ENCODE measurements at regions of chr2 and their contacts with region 1.

Region 1: DNA sequence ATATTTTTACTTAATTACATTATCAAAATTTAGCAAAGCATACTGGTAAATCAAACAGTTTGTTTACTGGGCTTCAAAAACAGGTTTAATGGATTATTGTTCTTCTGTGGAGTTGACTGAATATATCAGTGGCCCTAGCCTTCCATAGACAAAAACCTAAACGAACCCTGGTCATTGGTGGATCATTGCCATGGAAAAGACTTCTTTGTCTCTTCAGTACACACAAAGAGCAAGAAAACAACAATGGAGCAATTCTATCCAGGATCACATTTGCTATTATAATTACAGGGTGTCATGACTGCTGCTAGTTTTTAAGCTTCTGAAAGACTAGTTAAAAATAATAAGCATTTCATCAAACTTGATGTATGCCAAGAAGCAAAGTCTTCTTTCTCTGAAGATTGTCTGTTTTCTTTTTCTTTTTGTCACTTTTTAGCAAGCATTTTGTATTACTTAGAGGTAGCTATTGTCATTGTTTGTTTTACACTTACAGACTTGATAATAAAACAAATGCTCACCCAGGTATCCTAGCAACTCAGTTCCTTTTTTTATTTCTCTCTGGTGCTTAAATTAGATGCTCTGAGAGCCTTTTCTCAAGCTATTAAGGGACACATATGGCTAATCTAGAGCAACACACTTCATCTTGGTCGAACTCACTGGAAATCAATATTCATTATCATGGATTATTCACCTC is 1228.7 kb upstream of the DDX18 start:
- DNase-seq: no peak
- H3K4me3 ChIP-seq: no peak overlapping the region
- H3K27ac ChIP-seq: no peak overlapping the region
- H3K4me1 ChIP-seq: no peaks in the 10 kb centered on the region
- H3K27me3 ChIP-seq: no peaks in the 10 kb centered on the region
- CTCF ChIP-seq: no peak
- EP300 ChIP-seq: no peak
- POLR2A ChIP-seq: no peak

Region 2: DNA sequence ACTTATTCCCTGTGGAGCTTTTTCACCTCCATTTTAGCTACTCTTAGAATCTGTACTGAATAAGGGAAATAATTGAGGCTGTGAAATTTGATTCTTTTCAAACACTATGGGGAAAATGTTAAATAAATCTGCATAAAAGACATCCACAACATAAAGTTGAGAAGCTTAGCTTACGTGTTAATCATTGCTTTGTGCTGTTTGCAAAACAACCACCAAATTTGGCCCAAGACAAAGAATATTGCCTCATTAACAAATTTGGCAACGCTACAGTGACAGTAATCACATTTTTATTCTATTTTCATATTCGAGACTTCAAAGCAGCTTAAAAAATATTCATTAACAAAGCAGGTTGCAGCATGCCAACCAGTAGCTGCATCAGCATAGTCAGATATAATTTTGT is 1705.8 kb before region 1 on chr2:
- in situ Hi-C with region 1: no loop called
- intact Hi-C with region 1: loop called (anchors 10 kb)
- DNase-seq: no peak
- H3K4me3 ChIP-seq: no peak overlapping the region
- H3K27ac ChIP-seq: no peak overlapping the region
- H3K4me1 ChIP-seq: no peaks in the 10 kb centered on the region
- H3K27me3 ChIP-seq: no peaks in the 10 kb centered on the region
- CTCF ChIP-seq: no peak
- EP300 ChIP-seq: no peak
- POLR2A ChIP-seq: no peak

Region 3: GRCh38 chr2:116570128-116570527 is 15.7 kb before region 1 on chr2:
- in situ Hi-C with region 1: no loop called
- intact Hi-C with region 1: no loop called
- DNase-seq: no peak
- H3K4me3 ChIP-seq: no peak overlapping the region
- H3K27ac ChIP-seq: no peak overlapping the region
- H3K4me1 ChIP-seq: no peaks in the 10 kb centered on the region
- H3K27me3 ChIP-seq: no peaks in the 10 kb centered on the region
- CTCF ChIP-seq: no peak
- EP300 ChIP-seq: no peak
- POLR2A ChIP-seq: no peak

Measured in transverse colon (tissue), 4 donors.